ENCODE measurements at regions of chr1 and their contacts with region 1.

Region 1: DNA sequence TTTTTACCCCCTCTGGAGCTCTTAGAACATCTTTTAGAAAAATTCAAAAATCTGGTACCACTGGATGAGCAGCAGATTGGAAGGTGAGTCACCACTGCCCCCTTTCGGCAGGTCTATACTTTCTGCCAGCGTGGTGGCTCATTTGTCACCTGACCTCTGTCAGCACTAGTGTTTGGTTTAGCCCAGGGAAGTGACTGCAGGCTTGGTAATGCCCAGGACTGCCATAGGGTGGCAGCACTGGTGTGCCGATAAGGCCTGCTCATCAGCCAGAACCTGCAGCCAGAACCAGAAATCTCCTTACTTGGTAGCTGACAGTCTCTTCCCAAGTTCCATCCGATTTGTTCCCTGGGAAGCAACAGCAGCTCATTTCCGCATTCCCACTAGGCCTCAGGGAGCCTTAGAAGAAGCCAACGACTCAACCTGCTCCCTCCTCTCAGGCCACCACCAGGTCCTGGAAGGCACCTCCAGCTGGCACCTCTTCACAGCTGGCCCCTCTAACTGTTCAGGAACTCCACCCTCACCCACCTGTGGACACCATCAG is 6.8 kb downstream of the SMIM12 start:
- DNase-seq: peak; percentile 95 to 96
- H3K4me3 ChIP-seq: no peak overlapping the region
- H3K27ac ChIP-seq: peak overlapping the region; percentile 46; the same call in 1 of the 2 replicates
- H3K4me1 ChIP-seq: peaks cover 0 to 9% (median under 1%) of the 10 kb centered on the region in 4 experiments; a peak in 3 of 7 replicates
- H3K27me3 ChIP-seq: no peaks in the 10 kb centered on the region
- CTCF ChIP-seq: peak; percentile 95 to 100 (median 97)
- EP300 ChIP-seq: no peak
- POLR2A ChIP-seq: peak in 1 of 2 experiments; percentile 25; a peak in 1 of 3 replicates
- RAD21 ChIP-seq: peak; percentile 85 to 86

Region 2: GRCh38 chr1:34786521-34787325 is 66.0 kb before region 1 on chr1:
- CTCF ChIA-PET with region 1: interaction called, 230 read pairs
- POLR2A ChIA-PET with region 1: interaction called, 3 read pairs
- DNase-seq: peak in 1 of 2 experiments; percentile 73
- H3K4me3 ChIP-seq: no peak overlapping the region
- H3K27ac ChIP-seq: no peak overlapping the region
- H3K4me1 ChIP-seq: peaks cover 0 to 9% (median 4%) of the 10 kb centered on the region in 4 experiments; a peak in 4 of 7 replicates
- H3K27me3 ChIP-seq: peaks cover 0 to 8% (median 4%) of the 10 kb centered on the region in 4 experiments; a peak in 5 of 7 replicates
- CTCF ChIP-seq: peak; percentile 90 to 97 (median 93)
- EP300 ChIP-seq: no peak
- POLR2A ChIP-seq: no peak
- RAD21 ChIP-seq: peak; percentile 93

Region 3: DNA sequence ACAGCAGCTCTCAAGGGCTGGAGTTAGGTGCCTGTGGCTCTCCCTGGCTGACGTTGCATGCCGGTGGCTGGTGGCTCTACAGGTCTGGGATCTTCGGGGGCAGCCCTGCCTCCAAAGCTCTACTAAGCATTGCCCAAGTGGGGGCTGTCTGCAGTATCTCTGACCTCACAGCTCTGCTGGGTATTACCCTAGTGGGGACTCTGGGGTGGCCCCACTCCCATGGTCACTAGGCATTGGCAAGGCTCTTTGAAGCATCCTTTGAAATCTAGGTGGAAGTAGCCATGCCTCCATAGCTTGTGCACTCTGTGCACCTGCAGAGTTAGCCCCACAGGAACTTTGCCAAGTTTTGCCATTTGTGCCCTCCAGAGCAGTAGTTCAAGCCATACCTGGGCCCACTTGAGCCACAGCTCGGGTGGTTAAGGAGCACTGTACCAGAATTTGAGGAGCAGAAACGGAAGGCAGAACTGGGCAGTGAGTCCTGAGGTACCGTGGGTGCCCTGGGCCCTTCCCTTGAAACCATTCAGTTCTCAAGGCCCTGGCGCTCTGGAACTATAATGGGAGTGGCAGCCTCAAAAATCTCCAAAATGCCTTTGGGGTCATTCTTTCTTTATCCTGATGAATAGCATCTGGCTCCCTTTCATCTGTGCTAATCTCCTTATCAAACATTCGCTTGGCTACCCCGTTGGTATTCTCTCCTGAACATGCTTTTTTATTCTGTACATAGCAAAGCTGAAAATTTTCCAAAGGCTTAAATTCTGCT is 44.5 kb before region 1 on chr1:
- CTCF ChIA-PET with region 1: interaction called, 19 read pairs
- POLR2A ChIA-PET with region 1: no interaction called
- DNase-seq: peak in 1 of 2 experiments; percentile 39
- H3K4me3 ChIP-seq: no peak overlapping the region
- H3K27ac ChIP-seq: no peak overlapping the region
- H3K4me1 ChIP-seq: no peaks in the 10 kb centered on the region
- H3K27me3 ChIP-seq: no peaks in the 10 kb centered on the region
- CTCF ChIP-seq: no peak
- EP300 ChIP-seq: no peak
- POLR2A ChIP-seq: no peak
- RAD21 ChIP-seq: no peak

Region 4: DNA sequence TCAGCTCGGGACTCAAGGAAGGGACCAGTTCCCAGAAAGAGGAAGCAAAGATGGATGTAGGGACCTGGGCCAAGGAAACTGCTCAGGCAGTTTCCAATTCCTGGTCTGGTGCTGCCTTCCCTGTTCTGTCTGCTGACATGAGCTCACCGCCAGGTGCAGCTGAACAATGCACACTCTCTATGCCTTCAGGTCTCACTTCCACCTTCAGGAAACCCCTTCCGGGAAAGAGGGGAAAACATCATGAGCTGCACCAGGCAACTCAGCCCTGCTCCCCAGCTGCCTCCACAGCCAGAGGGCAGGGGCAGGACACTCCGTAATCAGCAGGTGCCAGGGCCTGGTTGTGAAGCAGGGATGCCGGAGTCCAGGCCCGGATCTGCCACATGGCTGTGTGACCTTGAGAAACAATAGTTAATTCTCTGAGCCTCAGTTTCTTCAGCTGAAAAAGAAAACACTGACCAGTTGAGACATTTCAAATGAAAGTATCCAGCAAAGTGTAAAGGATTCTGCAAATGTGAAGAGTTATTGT is 21.0 kb before region 1 on chr1:
- CTCF ChIA-PET with region 1: interaction called, 17 read pairs
- POLR2A ChIA-PET with region 1: no interaction called
- DNase-seq: peak in 1 of 2 experiments; percentile 30
- H3K4me3 ChIP-seq: no peak overlapping the region
- H3K27ac ChIP-seq: no peak overlapping the region
- H3K4me1 ChIP-seq: no peaks in the 10 kb centered on the region; a peak in 1 of 7 replicates
- H3K27me3 ChIP-seq: no peaks in the 10 kb centered on the region
- CTCF ChIP-seq: no peak
- EP300 ChIP-seq: no peak
- POLR2A ChIP-seq: no peak
- RAD21 ChIP-seq: no peak

Region 5: GRCh38 chr1:34970829-34971228 is 118.1 kb after region 1 on chr1:
- CTCF ChIA-PET with region 1: no interaction called
- POLR2A ChIA-PET with region 1: no interaction called
- DNase-seq: no peak
- H3K4me3 ChIP-seq: peak overlapping the region in 1 of 4 experiments; percentile 28; a peak in 1 of 8 replicates
- H3K27ac ChIP-seq: no peak overlapping the region
- H3K4me1 ChIP-seq: peaks cover 0 to 6% (median 2%) of the 10 kb centered on the region in 4 experiments; a peak in 2 of 7 replicates
- H3K27me3 ChIP-seq: no peaks in the 10 kb centered on the region
- CTCF ChIP-seq: no peak
- EP300 ChIP-seq: no peak
- POLR2A ChIP-seq: no peak
- RAD21 ChIP-seq: no peak

Region 6: GRCh38 chr1:35047188-35047858 is 194.6 kb after region 1 on chr1:
- CTCF ChIA-PET with region 1: no interaction called
- POLR2A ChIA-PET with region 1: no interaction called
- DNase-seq: no peak
- H3K4me3 ChIP-seq: no peak overlapping the region
- H3K27ac ChIP-seq: no peak overlapping the region
- H3K4me1 ChIP-seq: no peaks in the 10 kb centered on the region; a peak in 1 of 7 replicates
- H3K27me3 ChIP-seq: no peaks in the 10 kb centered on the region; a peak in 1 of 7 replicates
- CTCF ChIP-seq: no peak
- EP300 ChIP-seq: no peak
- POLR2A ChIP-seq: no peak
- RAD21 ChIP-seq: no peak